Calu3 (cell line): ENCODE measurements at regions of chr7 and their contacts with region 1.

Region 1: GRCh38 chr7:51593628-51594027 is 277.0 kb upstream of the COBL start:
- DNase-seq: no peak
- H3K4me3 Mint-ChIP-seq: no peak overlapping the region
- H3K27ac Mint-ChIP-seq: no peak overlapping the region
- H3K4me1 Mint-ChIP-seq: peaks cover 22% of the 10 kb centered on the region
- H3K27me3 Mint-ChIP-seq: no peaks in the 10 kb centered on the region
- CTCF ChIP-seq: no peak

Region 2: GRCh38 chr7:51501620-51502019 is 92.0 kb before region 1 on chr7:
- CTCF ChIA-PET with region 1: interaction called, 3 read pairs
- intact Hi-C with region 1: loop called (anchors 5 kb)
- DNase-seq: no peak
- H3K4me3 Mint-ChIP-seq: peak overlapping the region; percentile 14
- H3K27ac Mint-ChIP-seq: peak overlapping the region; percentile 51
- H3K4me1 Mint-ChIP-seq: peaks cover 49% of the 10 kb centered on the region
- H3K27me3 Mint-ChIP-seq: no peaks in the 10 kb centered on the region
- CTCF ChIP-seq: no peak

Region 3: DNA sequence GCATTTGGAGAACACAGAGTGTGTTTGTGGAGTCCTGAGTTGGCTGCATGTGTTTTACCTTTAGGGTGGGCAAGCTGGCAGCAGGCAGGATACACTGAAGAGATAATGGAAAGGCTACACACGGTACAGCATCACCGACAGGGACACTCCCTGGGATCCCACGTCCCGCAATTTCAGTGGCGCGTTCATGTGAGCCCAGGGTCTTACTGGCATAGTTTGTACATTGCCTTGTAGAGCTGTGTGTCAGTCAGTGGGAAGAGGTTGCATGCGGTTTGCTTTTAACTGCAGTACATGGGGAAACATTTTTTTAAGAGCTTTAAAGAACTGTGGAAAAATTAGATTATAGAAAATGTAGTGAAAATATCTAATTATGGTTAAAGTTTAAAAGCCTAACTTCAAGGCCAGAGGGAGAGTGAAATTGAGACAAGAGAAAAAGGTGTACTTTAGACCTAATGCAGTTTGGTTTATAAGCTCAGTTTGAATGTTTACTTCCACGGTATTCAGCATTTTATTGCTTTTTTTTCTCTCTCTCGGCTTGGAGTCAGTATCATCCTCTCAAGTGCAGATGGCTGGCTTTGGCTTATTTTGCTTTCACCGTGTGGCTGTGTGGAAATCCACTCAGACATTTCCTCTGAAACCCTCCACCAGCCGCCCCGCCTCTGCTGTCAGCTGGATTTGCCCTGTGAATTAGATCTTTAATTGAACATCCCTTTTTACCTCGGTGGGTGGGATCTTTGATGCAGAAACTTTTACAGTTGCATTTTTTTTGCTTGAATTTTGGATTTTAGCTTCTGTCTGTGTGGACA is 87.2 kb after region 1 on chr7:
- CTCF ChIA-PET with region 1: no interaction called
- intact Hi-C with region 1: no loop called
- DNase-seq: no peak
- H3K4me3 Mint-ChIP-seq: no peak overlapping the region
- H3K27ac Mint-ChIP-seq: no peak overlapping the region
- H3K4me1 Mint-ChIP-seq: no peaks in the 10 kb centered on the region
- H3K27me3 Mint-ChIP-seq: peaks cover 31% of the 10 kb centered on the region
- CTCF ChIP-seq: no peak

Region 4: GRCh38 chr7:51968461-51968860 is 374.8 kb after region 1 on chr7:
- CTCF ChIA-PET with region 1: no interaction called
- intact Hi-C with region 1: no loop called
- DNase-seq: no peak
- H3K4me3 Mint-ChIP-seq: no peak overlapping the region
- H3K27ac Mint-ChIP-seq: no peak overlapping the region
- H3K4me1 Mint-ChIP-seq: no peaks in the 10 kb centered on the region
- H3K27me3 Mint-ChIP-seq: no peaks in the 10 kb centered on the region
- CTCF ChIP-seq: no peak